Activated CD8-positive, alpha-beta T cell treated with anti-CD3 and anti-CD28 coated beads for 36 hours (primary cell): ENCODE measurements at regions of chr2 and their contacts with region 1.

Region 1: GRCh38 chr2:118013724-118014491 is at the start of gene CCDC93:
- DNase-seq: peak; percentile 84
- ATAC-seq: peak; percentile 92
- H3K4me3 Mint-ChIP-seq: peak within 1 kb of the TSS; percentile 97
- H3K27ac Mint-ChIP-seq: peak within 1 kb of the TSS; percentile 90
- H3K4me1 Mint-ChIP-seq: peaks cover 42% of the 10 kb centered on the region
- H3K27me3 Mint-ChIP-seq: no peaks in the 10 kb centered on the region
- CTCF ChIP-seq: no peak
- total RNA-seq, gene CCDC93: 24.5 to 25.4 TPM

Region 2: DNA sequence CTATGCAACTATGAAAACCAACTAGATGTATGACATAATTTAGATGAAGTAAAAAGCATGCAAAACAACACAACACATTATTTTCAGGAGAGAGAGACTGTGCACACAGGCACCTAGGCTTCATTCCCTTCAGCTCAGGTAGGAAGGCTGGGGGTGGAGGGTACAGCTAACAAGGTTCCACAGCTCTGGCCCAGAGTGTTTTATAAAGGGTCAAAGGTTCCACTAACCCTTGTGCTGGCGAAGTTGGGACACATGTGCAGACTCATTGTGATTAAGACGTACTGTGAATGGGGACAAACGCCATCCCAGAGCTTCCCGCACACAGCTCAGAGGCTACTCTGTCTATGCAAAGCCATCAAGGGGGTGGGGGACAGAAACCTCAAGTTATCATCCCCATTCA is 19.2 kb before region 1 on chr2:
- CTCF ChIA-PET with region 1: no interaction called
- POLR2A ChIA-PET with region 1: no interaction called
- intact Hi-C with region 1: no loop called
- DNase-seq: no peak
- ATAC-seq: no peak
- H3K4me3 Mint-ChIP-seq: no peak overlapping the region
- H3K27ac Mint-ChIP-seq: no peak overlapping the region
- H3K4me1 Mint-ChIP-seq: no peaks in the 10 kb centered on the region
- H3K27me3 Mint-ChIP-seq: no peaks in the 10 kb centered on the region
- CTCF ChIP-seq: no peak

Region 3: GRCh38 chr2:118032169-118033013 is 18.5 kb after region 1 on chr2:
- CTCF ChIA-PET with region 1: interaction called, 11 read pairs
- POLR2A ChIA-PET with region 1: no interaction called
- intact Hi-C with region 1: no loop called
- DNase-seq: peak; percentile 70
- ATAC-seq: peak; percentile 88
- H3K4me3 Mint-ChIP-seq: no peak overlapping the region
- H3K27ac Mint-ChIP-seq: no peak overlapping the region
- H3K4me1 Mint-ChIP-seq: no peaks in the 10 kb centered on the region
- H3K27me3 Mint-ChIP-seq: peaks cover 27% of the 10 kb centered on the region
- CTCF ChIP-seq: peak; percentile 74